Posterior vena cava (tissue), 2 donors: ENCODE measurements at regions of chr6 and their contacts with region 1.

Region 1: DNA sequence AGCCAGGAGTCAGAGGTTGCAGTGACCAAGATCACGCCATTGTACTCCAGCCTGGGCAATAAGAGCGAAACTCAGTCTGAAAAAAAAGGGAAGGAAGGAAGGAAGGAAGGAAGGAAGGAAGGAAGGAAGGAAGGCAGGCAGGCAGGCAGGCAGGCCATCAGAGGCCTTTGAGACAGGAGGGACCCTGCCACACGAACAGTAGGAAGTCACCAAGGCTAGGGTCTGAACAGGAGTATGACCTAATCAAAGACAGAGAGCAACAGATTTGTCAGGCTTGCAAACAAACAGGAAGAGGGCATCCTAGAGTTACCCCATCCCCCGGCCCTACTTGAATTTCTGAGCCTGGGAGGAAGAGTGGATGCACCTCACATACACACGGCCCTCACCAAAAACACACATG is 67.1 kb downstream of the FGD2 start:
- DNase-seq: no peak

Region 2: GRCh38 chr6:37018198-37019064 is 54.1 kb before region 1 on chr6:
- intact Hi-C with region 1: no loop called
- DNase-seq: peak; percentile 96

Region 3: DNA sequence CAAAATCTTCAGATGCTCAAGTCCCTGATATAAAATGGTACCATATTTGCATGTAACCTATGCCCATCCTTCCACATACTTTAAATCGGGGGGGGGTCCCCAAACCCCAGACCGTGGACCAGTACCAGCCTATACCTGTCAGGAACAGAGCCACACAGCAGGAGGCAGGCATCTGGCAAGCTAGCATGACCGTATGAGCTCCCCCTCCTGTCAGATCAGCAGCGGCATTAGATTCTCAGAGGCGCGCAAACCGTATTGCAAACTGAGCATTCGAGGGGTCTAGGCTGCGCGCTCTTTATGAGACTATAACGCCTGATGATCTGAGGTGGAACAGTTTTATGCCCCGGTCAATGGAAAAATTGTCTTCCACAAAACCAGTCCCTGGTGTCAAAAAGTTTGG is 36.4 kb before region 1 on chr6:
- intact Hi-C with region 1: loop called in 1 of 2 experiments (anchors 1 kb)
- DNase-seq: no peak